Caco-2 (cell line): ENCODE measurements at regions of chr1 and their contacts with region 1.

Region 1: DNA sequence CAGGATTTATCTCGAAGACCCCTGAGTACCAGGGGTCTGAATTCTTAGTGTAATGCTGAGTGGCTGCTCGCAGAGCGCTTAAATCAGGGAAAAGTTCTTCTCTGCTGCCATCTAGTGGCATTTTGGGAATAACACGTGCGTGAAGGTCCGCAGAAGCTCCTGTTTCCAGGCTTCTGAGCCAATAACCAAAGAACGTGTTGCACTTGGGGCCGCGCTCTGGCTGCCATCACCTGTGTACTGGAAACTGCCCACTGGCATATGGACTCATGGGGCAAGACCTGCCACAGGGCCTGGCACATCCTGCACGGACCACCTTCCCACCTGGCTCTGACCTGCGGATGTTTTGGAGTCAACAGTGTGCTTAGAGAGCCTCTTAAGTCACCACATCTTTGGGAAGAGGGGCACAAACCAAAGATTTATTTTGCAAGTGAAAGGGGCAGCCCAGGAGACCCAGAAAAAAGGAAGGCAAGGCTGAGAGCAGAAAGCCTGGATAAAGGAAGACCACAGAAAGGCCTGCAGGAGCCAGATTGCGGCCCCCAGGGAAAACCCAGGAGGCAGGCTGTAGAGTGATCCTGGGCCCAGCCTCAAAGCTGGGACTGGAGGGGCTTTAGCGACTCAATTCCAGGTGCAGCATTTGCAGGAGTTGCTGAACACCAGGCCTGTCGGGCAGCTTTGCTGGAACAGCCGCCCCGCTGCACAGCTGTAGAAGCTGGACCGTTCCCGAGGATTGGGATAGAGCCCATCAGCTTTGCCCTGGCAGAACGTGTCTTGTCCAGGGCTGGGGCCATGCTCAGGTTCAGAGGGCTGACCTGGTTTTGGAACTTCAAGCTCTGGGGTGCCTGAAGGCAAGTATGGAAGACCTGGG is 13.0 kb downstream of the CHIT1 start:
- DNase-seq: peak; percentile 59 to 80
- H3K4me3 ChIP-seq: no peak overlapping the region
- H3K4me3 Mint-ChIP-seq: no peak overlapping the region
- H3K27ac Mint-ChIP-seq: peak overlapping the region; percentile 72
- H3K4me1 ChIP-seq: peaks cover 38% of the 10 kb centered on the region
- H3K4me1 Mint-ChIP-seq: peaks cover 34% of the 10 kb centered on the region
- H3K27me3 ChIP-seq: no peaks in the 10 kb centered on the region
- H3K27me3 Mint-ChIP-seq: no peaks in the 10 kb centered on the region
- CTCF ChIP-seq: peak; percentile 65 to 84

Region 2: DNA sequence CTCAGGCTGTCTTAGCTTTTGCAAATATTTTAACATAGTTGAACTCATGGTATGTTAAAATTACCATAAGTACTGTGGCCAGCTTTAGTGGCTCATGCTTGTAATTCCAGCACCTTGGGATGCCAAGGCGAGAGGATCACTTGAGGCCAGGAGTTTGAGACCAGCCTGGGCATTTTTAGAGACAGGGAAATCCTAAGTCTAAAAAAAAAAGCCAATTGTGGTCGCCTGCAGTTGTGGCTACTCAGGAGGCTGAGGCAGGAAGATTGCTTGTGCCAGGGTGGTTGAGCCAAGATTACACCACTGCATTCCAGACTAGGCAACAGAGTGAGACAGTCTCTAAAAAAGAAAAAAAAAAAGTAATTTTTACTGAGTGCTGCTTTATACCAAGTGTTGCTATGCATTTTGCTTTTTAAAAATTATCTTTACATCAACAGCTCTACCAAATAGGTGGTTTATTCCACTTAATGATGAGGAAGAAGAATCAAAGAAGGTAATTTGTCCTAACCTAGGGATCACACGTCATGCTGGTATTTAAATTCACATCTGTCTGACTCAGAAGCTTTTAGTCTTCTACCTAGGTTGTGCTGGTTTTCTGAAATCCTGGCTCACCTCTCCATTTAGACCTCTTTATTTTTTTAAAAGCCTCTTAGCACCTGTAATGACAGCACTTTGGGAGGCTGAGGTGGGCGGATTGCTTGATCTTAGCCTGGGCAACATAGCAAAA is 851.3 kb before region 1 on chr1:
- CTCF ChIA-PET with region 1: no interaction called
- POLR2A ChIA-PET with region 1: no interaction called
- intact Hi-C with region 1: no loop called
- DNase-seq: no peak
- H3K4me3 ChIP-seq: no peak overlapping the region
- H3K4me3 Mint-ChIP-seq: no peak overlapping the region
- H3K27ac Mint-ChIP-seq: no peak overlapping the region
- H3K4me1 ChIP-seq: no peaks in the 10 kb centered on the region
- H3K4me1 Mint-ChIP-seq: no peaks in the 10 kb centered on the region
- H3K27me3 ChIP-seq: no peaks in the 10 kb centered on the region
- H3K27me3 Mint-ChIP-seq: no peaks in the 10 kb centered on the region
- CTCF ChIP-seq: no peak

Region 3: DNA sequence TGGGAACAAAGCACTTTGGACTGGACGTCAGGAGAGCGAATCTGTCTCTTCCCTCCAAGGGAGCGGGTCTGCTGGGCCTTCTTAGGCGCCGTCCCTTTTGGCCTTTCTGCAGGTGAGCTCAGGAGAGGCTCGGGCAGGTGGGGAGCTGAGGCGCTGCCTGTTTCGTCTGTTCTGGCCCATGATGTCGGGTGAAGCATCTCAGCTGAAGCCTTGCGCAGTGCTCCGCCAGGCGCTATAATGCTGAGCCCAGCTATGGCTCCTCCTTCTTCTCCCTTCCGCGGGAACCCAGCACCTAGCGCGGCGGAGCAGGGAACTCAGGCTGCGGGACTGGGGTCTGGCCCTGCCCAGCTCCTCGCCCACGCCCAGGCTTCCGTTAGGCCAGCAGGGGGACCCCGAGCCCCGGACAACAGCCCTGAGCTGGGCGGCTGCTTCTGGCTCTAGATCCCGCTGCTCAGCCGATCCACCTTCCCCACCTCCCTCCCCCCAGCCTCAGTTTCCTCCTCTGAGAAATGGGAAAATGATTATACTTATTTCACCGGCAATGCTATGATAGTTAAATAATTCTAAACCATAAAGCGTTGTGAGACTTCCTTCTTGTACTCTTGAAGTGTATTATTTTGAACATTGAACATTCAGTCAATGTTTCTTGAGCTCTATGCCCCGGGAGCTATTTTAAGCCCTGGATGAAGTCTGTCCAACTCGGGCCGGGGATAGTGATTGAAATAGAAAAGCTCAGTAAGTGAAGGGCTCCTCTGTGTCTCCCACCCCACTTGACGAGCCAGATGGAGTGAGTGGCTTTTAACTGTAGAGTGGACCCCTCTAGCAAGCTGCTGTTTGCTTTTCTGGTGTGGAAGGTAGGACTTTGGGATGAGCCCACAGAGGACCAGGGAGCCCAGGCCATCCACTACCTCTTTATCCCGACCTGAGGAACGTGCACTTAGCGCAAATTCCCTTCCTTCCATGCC is 98.6 kb before region 1 on chr1:
- CTCF ChIA-PET with region 1: interaction called, 131 read pairs
- POLR2A ChIA-PET with region 1: no interaction called
- intact Hi-C with region 1: loop called (anchors 1 kb)
- DNase-seq: peak; percentile 80 to 87
- H3K4me3 ChIP-seq: no peak overlapping the region
- H3K4me3 Mint-ChIP-seq: no peak overlapping the region
- H3K27ac Mint-ChIP-seq: no peak overlapping the region
- H3K4me1 ChIP-seq: no peaks in the 10 kb centered on the region
- H3K4me1 Mint-ChIP-seq: no peaks in the 10 kb centered on the region
- H3K27me3 ChIP-seq: no peaks in the 10 kb centered on the region
- H3K27me3 Mint-ChIP-seq: no peaks in the 10 kb centered on the region
- CTCF ChIP-seq: peak; percentile 89 to 93

Region 4: GRCh38 chr1:203166566-203166940 is 50.0 kb before region 1 on chr1:
- CTCF ChIA-PET with region 1: interaction called, 19 read pairs
- POLR2A ChIA-PET with region 1: no interaction called
- intact Hi-C with region 1: loop called (anchors 1 kb)
- DNase-seq: peak in 1 of 2 experiments; percentile 40
- H3K4me3 ChIP-seq: no peak overlapping the region
- H3K4me3 Mint-ChIP-seq: no peak overlapping the region
- H3K27ac Mint-ChIP-seq: peak overlapping the region; percentile 46
- H3K4me1 ChIP-seq: peaks cover 57% of the 10 kb centered on the region
- H3K4me1 Mint-ChIP-seq: peaks cover 43% of the 10 kb centered on the region
- H3K27me3 ChIP-seq: no peaks in the 10 kb centered on the region
- H3K27me3 Mint-ChIP-seq: no peaks in the 10 kb centered on the region
- CTCF ChIP-seq: peak in 1 of 2 experiments; percentile 51

Region 5: DNA sequence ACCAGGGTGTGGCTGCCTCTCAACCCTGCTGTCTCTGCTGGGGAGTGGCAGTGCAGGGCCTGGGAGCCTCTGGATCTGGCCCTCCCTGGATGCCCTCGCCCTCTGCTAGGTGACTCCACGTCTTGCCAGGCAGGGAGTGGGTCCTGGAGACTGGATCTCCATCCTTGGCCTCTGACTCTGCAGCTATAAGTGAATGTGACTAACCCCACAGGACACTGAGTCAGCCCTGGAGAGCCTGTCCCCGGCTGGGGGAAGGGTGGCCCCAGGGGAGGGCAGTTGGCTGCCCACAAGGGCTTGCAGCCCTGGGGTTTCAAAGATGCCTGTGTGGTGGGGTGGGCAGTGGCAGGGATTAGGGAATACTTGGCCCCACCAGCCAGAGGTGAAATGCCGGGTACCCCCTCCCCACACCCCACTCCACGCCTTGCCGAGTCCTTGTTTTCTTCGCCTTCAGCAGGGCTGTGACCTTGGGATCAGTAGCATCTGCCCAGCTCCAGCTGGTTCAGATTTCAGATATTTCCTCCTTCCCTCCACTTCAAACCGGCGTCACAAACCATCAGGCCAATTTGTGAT is 39.0 kb before region 1 on chr1:
- CTCF ChIA-PET with region 1: interaction called, 14 read pairs
- POLR2A ChIA-PET with region 1: no interaction called
- intact Hi-C with region 1: loop called (anchors 1 kb)
- DNase-seq: peak in 1 of 2 experiments; percentile 55
- H3K4me3 ChIP-seq: no peak overlapping the region
- H3K4me3 Mint-ChIP-seq: peak overlapping the region; percentile 65
- H3K27ac Mint-ChIP-seq: peak overlapping the region; percentile 95
- H3K4me1 ChIP-seq: peaks cover 71% of the 10 kb centered on the region
- H3K4me1 Mint-ChIP-seq: peaks cover 67% of the 10 kb centered on the region
- H3K27me3 ChIP-seq: no peaks in the 10 kb centered on the region
- H3K27me3 Mint-ChIP-seq: no peaks in the 10 kb centered on the region
- CTCF ChIP-seq: no peak

Region 6: GRCh38 chr1:203244776-203245175 is 28.3 kb after region 1 on chr1:
- CTCF ChIA-PET with region 1: interaction called, 3 read pairs
- POLR2A ChIA-PET with region 1: no interaction called
- intact Hi-C with region 1: loop called (anchors 2 kb)
- DNase-seq: peak; percentile 60 to 62
- H3K4me3 ChIP-seq: no peak overlapping the region
- H3K4me3 Mint-ChIP-seq: no peak overlapping the region
- H3K27ac Mint-ChIP-seq: no peak overlapping the region
- H3K4me1 ChIP-seq: peaks cover 6% of the 10 kb centered on the region; the same call in 1 of the 2 replicates
- H3K4me1 Mint-ChIP-seq: peaks cover 10% of the 10 kb centered on the region
- H3K27me3 ChIP-seq: no peaks in the 10 kb centered on the region
- H3K27me3 Mint-ChIP-seq: peaks cover 7% of the 10 kb centered on the region
- CTCF ChIP-seq: no peak